ENCODE measurements at regions of chr1 and their contacts with region 1.

Region 1: DNA sequence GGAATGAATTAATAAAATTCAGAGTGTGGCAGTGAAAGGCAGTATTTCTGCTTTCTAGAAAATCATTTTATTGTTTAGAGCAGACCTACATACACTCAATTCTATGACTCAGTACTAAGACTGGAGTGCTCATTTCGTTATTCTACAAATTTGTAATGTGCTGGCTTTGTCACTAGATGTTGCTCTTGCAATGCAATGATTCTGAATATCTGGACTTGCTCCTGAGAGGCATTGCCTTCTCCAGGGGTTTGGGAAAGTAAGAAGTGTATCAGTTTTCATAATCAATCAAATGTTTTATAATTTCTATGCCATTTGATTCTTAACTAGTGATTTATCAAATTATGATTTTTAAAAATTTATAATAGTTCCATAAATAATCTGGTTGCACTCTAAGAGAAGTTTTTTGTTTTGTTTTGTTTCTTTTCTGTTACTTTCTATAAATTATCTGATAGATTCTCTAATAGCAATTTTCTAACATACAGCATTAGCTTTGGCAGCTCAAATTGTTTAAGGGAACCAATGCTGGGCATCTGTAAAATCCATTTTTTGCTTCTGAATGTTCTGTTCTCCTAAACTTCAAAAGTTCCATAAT is 280.5 kb upstream of the SGIP1 start:
- DNase-seq: peak in 1 of 2 donors; percentile 45
- ATAC-seq: peak; percentile 67 to 96 (median 92)
- H3K4me3 ChIP-seq: no peak overlapping the region
- H3K27ac ChIP-seq: no peak overlapping the region
- H3K4me1 ChIP-seq: peaks cover 0 to 43% (median 6%) of the 10 kb centered on the region in 9 donors
- H3K27me3 ChIP-seq: no peaks in the 10 kb centered on the region
- CTCF ChIP-seq: peak; percentile 66 to 92 (median 85)

Region 2: DNA sequence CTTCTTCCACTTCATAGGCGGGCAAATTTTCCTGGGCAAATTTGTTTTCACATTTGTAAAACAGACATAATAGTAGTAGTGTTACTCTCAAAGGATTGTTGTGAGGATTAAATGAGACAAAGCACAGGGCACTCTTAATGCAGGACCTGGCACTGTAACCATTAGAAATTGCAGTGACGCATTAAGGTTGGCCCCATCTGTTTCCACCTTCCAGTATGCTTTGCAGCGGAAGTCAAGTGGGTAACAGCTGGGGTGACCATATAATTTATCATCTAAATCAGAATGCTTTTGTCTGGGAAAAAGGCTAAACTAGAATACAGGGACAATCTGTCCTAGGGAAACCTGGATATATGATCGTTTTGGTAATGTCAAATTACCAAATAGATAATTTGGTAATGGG is 1916.0 kb before region 1 on chr1:
- intact Hi-C with region 1: loop called in 1 of 10 experiments (anchors 5 kb)
- DNase-seq: no peak
- ATAC-seq: no peak
- H3K4me3 ChIP-seq: no peak overlapping the region
- H3K27ac ChIP-seq: no peak overlapping the region
- H3K4me1 ChIP-seq: peaks cover 0 to 3% (median 0%) of the 10 kb centered on the region in 9 donors
- H3K27me3 ChIP-seq: no peaks in the 10 kb centered on the region
- CTCF ChIP-seq: no peak

Region 3: GRCh38 chr1:65615859-65616258 is 637.6 kb before region 1 on chr1:
- intact Hi-C with region 1: no loop called
- DNase-seq: no peak
- ATAC-seq: no peak
- H3K4me3 ChIP-seq: no peak overlapping the region
- H3K27ac ChIP-seq: no peak overlapping the region
- H3K4me1 ChIP-seq: peaks cover 0 to 6% (median 0%) of the 10 kb centered on the region in 9 donors
- H3K27me3 ChIP-seq: no peaks in the 10 kb centered on the region
- CTCF ChIP-seq: no peak

Region 4: DNA sequence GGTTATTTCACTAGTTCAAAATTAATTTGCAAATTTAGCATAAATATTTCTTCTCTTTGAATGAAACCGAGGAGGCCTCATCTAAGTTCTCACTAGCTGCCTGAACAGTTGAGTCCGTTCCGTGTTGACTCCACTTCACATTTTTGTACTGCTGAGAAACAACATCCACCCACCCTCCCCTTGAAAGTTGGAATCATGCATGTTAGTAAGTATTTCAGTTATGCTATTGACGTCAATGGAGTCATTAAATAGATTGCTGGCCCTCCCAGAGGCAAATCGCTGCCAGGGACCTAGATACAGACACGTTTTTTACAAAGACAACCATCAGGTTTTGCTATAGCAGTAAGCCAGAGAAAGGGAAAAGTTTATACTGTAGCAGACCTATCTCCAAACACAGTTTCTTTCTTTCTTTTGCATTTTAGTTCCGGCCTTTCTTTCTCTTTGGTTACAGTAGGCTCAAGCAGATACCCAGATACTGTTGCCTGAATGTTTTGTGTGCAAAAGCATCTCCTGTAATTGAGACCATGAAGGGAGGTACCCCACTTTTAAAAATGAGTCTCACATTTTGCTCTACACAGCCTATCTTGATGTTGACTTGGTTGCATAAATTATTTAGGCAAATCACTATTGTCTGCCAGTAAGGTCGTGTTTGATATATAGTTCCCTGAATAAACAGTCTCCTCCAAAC is 17.9 kb after region 1 on chr1:
- intact Hi-C with region 1: no loop called
- DNase-seq: peak; percentile 69 to 95
- ATAC-seq: peak; percentile 89 to 96 (median 94)
- H3K4me3 ChIP-seq: peak overlapping the region in 7 of 10 donors; percentile 3 to 41 (median 20)
- H3K27ac ChIP-seq: peak overlapping the region; percentile 63 to 91 (median 88)
- H3K4me1 ChIP-seq: peaks cover 12 to 95% (median 81%) of the 10 kb centered on the region in 9 donors
- H3K27me3 ChIP-seq: no peaks in the 10 kb centered on the region
- CTCF ChIP-seq: no peak

Region 5: GRCh38 chr1:66503841-66504470 is 250.5 kb after region 1 on chr1:
- intact Hi-C with region 1: loop called in 8 of 10 experiments (anchors 5 to 10 kb)
- DNase-seq: peak in 1 of 2 donors; percentile 64
- ATAC-seq: peak; percentile 64 to 93 (median 78)
- H3K4me3 ChIP-seq: no peak overlapping the region
- H3K27ac ChIP-seq: peak overlapping the region in 1 of 10 donors; percentile 8
- H3K4me1 ChIP-seq: peaks cover 0 to 10% (median 0%) of the 10 kb centered on the region in 9 donors
- H3K27me3 ChIP-seq: no peaks in the 10 kb centered on the region
- CTCF ChIP-seq: peak; percentile 25 to 80 (median 71)

Region 6: GRCh38 chr1:66752000-66752592 is 498.7 kb after region 1 on chr1 and contains the start of gene DYNLT5:
- intact Hi-C with region 1: loop called in 1 of 10 experiments (anchors 10 kb)
- DNase-seq: peak; percentile 70 to 74
- ATAC-seq: peak; percentile 92 to 97 (median 96)
- H3K4me3 ChIP-seq: peak within 1 kb of the TSS; percentile 33 to 64 (median 58)
- H3K27ac ChIP-seq: peak within 1 kb of the TSS; percentile 41 to 89 (median 81)
- H3K4me1 ChIP-seq: peaks cover 3 to 33% (median 20%) of the 10 kb centered on the region in 9 donors
- H3K27me3 ChIP-seq: peaks cover 0 to 19% (median 6%) of the 10 kb centered on the region in 7 donors
- CTCF ChIP-seq: peak in 7 of 9 donors; percentile 1 to 58 (median 38)
- total RNA-seq, gene DYNLT5: 0.89 to 4.2 (median 1.5) TPM